Gastrocnemius medialis (tissue), 4 donors: ENCODE measurements at regions of chr9 and their contacts with region 1.

Region 1: DNA sequence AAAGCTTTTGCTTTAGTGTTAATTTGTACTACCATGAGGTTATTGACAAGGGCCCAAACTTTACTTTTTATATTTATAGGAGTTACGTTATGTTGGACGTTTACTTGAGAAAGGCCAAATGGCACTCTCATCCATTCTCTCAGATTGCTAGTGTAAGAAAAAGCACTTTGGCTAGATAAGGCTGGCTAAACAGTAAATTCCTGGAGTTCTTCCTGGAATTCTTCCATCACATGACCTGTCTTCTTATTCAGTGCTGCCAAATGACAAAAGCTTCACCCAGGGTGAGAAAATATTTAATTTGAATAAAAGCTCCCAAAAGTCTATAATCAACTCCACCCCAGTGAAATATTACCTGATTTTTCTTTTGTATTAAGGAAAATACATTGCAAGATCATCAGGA is 1568.9 kb upstream of the ACO1 start:
- DNase-seq: no peak
- ATAC-seq: no peak
- H3K4me3 ChIP-seq: no peak overlapping the region
- H3K27ac ChIP-seq: no peak overlapping the region
- H3K4me1 ChIP-seq: no peaks in the 10 kb centered on the region
- H3K27me3 ChIP-seq: no peaks in the 10 kb centered on the region
- CTCF ChIP-seq: no peak
- POLR2A ChIP-seq: no peak

Region 2: GRCh38 chr9:30723656-30724055 is 91.9 kb before region 1 on chr9:
- in situ Hi-C with region 1: no loop called
- intact Hi-C with region 1: no loop called
- DNase-seq: no peak
- ATAC-seq: no peak
- H3K4me3 ChIP-seq: no peak overlapping the region
- H3K27ac ChIP-seq: no peak overlapping the region
- H3K4me1 ChIP-seq: no peaks in the 10 kb centered on the region
- H3K27me3 ChIP-seq: no peaks in the 10 kb centered on the region
- CTCF ChIP-seq: no peak
- POLR2A ChIP-seq: no peak

Region 3: DNA sequence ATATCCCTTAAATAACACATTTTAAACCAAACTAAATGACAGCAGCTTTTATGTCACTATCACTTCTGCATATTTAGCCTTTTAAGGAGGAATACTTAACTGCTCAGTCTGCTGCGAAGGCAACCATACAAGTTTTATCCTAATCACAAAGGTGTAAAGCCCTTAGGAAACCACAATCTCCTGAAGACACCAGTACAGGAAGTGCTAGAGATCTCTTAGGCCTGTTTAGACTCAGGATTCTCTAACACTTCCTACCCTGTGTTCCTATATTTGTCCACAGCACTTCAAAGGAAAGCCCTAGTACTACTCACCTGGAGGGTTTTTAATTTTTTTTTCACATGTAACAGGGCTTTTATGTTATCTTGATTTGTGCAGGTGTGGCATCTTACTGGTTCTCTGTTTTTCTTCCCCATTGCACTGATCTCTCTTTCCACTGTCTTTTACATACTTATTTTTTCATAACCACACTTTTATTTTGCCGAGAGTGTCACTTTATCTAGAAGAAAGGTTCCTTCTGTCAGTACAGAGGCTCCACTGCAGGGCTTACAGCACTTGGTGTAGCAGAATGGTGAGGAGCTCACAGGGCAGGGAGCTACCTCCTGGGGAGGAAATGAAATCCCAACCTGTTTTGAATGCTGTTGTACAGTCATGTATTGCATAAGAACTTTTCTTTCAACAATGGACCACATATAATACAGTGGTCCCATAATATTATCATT is 508.3 kb after region 1 on chr9:
- in situ Hi-C with region 1: no loop called
- intact Hi-C with region 1: loop called (anchors 5 kb)
- DNase-seq: no peak
- ATAC-seq: no peak
- H3K4me3 ChIP-seq: no peak overlapping the region
- H3K27ac ChIP-seq: no peak overlapping the region
- H3K4me1 ChIP-seq: no peaks in the 10 kb centered on the region
- H3K27me3 ChIP-seq: no peaks in the 10 kb centered on the region
- CTCF ChIP-seq: no peak
- POLR2A ChIP-seq: no peak